ENCODE measurements at regions of chrX and their contacts with region 1.

Region 1: GRCh38 chrX:153947009-153947769 is 2.7 kb upstream of the RENBP start:
- DNase-seq: peak; percentile 83
- ATAC-seq: peak; percentile 82
- H3K4me3 Mint-ChIP-seq: peak overlapping the region; percentile 4
- H3K27ac Mint-ChIP-seq: peak overlapping the region; percentile 86
- H3K4me1 Mint-ChIP-seq: peaks cover 39% of the 10 kb centered on the region
- H3K27me3 Mint-ChIP-seq: no peaks in the 10 kb centered on the region
- CTCF ChIP-seq: peak; percentile 75

Region 2: GRCh38 chrX:153755136-153755535 is 192.1 kb before region 1 on chrX:
- CTCF ChIA-PET with region 1: no interaction called
- POLR2A ChIA-PET with region 1: no interaction called
- intact Hi-C with region 1: no loop called
- DNase-seq: no peak
- ATAC-seq: no peak
- H3K4me3 Mint-ChIP-seq: no peak overlapping the region
- H3K27ac Mint-ChIP-seq: no peak overlapping the region
- H3K4me1 Mint-ChIP-seq: no peaks in the 10 kb centered on the region
- H3K27me3 Mint-ChIP-seq: no peaks in the 10 kb centered on the region
- CTCF ChIP-seq: no peak

Region 3: GRCh38 chrX:153800177-153800722 is 146.9 kb before region 1 on chrX:
- CTCF ChIA-PET with region 1: no interaction called
- POLR2A ChIA-PET with region 1: no interaction called
- intact Hi-C with region 1: no loop called
- DNase-seq: no peak
- ATAC-seq: no peak
- H3K4me3 Mint-ChIP-seq: no peak overlapping the region
- H3K27ac Mint-ChIP-seq: no peak overlapping the region
- H3K4me1 Mint-ChIP-seq: peaks cover 9% of the 10 kb centered on the region
- H3K27me3 Mint-ChIP-seq: no peaks in the 10 kb centered on the region
- CTCF ChIP-seq: no peak

Region 4: GRCh38 chrX:153927922-153928760 is 19.0 kb before region 1 on chrX:
- CTCF ChIA-PET with region 1: interaction called, 136 read pairs
- POLR2A ChIA-PET with region 1: interaction called, 130 read pairs
- intact Hi-C with region 1: no loop called
- DNase-seq: peak; percentile 95
- ATAC-seq: peak; percentile 72
- H3K4me3 Mint-ChIP-seq: peak overlapping the region; percentile 88
- H3K27ac Mint-ChIP-seq: peak overlapping the region; percentile 99
- H3K4me1 Mint-ChIP-seq: peaks cover 22% of the 10 kb centered on the region
- H3K27me3 Mint-ChIP-seq: no peaks in the 10 kb centered on the region
- CTCF ChIP-seq: no peak

Region 5: DNA sequence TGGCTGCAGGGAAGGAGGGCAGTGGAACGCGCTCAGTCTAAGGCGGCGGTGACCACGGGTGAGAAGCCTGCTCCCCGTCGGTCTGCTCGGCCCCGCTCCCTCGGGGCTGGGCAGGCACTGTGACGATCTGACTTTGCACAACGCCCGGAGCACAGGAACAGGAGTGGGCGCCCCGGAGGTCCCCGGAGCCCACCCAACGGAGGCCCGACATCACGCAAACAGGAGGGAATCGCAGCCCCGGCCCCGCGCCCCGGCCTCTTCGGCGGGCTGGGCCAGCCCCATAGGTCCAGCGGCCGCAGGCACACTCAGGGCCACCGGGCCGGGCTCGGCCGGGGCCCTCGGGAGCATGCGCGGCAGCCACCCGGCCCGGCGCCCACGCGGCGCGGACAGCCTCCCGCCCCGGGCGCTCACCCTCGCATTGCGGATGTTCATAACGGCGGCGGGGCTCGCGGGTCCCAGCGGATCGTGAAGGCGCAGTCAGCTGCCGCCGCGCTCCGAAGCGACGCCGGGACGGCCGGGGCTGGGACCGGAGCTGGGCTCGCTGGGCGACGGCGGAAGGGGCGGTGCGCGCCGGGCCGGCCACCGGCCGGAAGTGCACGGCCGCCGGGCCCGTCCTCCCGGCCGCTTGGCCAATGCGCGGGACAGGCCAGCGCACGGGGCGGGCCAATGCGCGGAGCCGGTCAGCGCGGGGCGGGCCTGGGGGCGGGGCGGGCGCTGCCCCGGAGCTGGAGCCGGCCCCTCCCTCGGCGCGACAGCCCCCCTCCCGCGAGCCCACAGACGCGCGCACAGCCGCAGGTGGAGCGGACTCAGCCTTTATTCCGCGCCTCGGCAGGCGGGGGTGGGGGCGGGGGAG is 12.5 kb before region 1 on chrX and contains the start of gene NAA10:
- CTCF ChIA-PET with region 1: interaction called, 136 read pairs
- POLR2A ChIA-PET with region 1: interaction called, 130 read pairs
- intact Hi-C with region 1: no loop called
- DNase-seq: peak; percentile 64
- ATAC-seq: peak; percentile 87
- H3K4me3 Mint-ChIP-seq: peak within 1 kb of the TSS; percentile 88
- H3K27ac Mint-ChIP-seq: peak within 1 kb of the TSS; percentile 78
- H3K4me1 Mint-ChIP-seq: peaks cover 39% of the 10 kb centered on the region
- H3K27me3 Mint-ChIP-seq: no peaks in the 10 kb centered on the region
- CTCF ChIP-seq: no peak
- total RNA-seq, gene NAA10: 123 to 136 TPM

Region 6: DNA sequence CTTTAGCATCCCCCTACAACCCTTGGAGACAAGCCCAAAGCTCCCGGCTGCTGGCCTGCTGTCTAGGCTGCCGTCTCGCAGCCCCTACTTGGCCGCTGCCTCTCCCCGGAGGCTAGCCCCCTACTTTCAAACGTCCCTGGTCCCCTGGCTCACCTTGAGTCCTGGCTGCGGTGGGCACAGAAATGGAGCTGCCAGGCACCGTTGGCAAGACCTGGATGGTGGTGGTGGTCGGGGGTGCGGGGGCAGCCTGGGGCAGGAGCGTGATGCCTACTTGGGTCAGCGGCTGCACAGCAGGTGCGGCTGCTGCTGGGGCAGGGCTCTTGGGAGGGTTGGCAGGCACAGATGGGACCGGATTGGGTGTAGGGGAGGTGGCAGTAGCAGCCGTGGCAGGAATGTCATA is 12.5 kb after region 1 on chrX:
- CTCF ChIA-PET with region 1: interaction called, 3 read pairs
- POLR2A ChIA-PET with region 1: interaction called, 16 read pairs
- intact Hi-C with region 1: no loop called
- DNase-seq: no peak
- ATAC-seq: no peak
- H3K4me3 Mint-ChIP-seq: no peak overlapping the region
- H3K27ac Mint-ChIP-seq: no peak overlapping the region
- H3K4me1 Mint-ChIP-seq: no peaks in the 10 kb centered on the region
- H3K27me3 Mint-ChIP-seq: no peaks in the 10 kb centered on the region
- CTCF ChIP-seq: no peak

Region 7: GRCh38 chrX:153971450-153972367 is 24.5 kb after region 1 on chrX and contains the start of gene HCFC1:
- CTCF ChIA-PET with region 1: interaction called, 40 read pairs
- POLR2A ChIA-PET with region 1: interaction called, 64 read pairs
- intact Hi-C with region 1: no loop called
- DNase-seq: peak; percentile 93
- ATAC-seq: peak; percentile 32
- H3K4me3 Mint-ChIP-seq: peak within 1 kb of the TSS; percentile 93
- H3K27ac Mint-ChIP-seq: peak within 1 kb of the TSS; percentile 100
- H3K4me1 Mint-ChIP-seq: peaks cover 23% of the 10 kb centered on the region
- H3K27me3 Mint-ChIP-seq: no peaks in the 10 kb centered on the region
- CTCF ChIP-seq: no peak
- total RNA-seq, gene HCFC1: 115 to 116 TPM

Region 8: GRCh38 chrX:153988493-153988892 is 41.3 kb after region 1 on chrX:
- CTCF ChIA-PET with region 1: no interaction called
- POLR2A ChIA-PET with region 1: no interaction called
- intact Hi-C with region 1: no loop called
- DNase-seq: no peak
- ATAC-seq: no peak
- H3K4me3 Mint-ChIP-seq: no peak overlapping the region
- H3K27ac Mint-ChIP-seq: peak overlapping the region; percentile 46
- H3K4me1 Mint-ChIP-seq: peaks cover 33% of the 10 kb centered on the region
- H3K27me3 Mint-ChIP-seq: no peaks in the 10 kb centered on the region
- CTCF ChIP-seq: no peak

Region 9: GRCh38 chrX:154064637-154065435 is 117.6 kb after region 1 on chrX:
- CTCF ChIA-PET with region 1: no interaction called
- POLR2A ChIA-PET with region 1: no interaction called
- intact Hi-C with region 1: no loop called
- DNase-seq: no peak
- ATAC-seq: no peak
- H3K4me3 Mint-ChIP-seq: no peak overlapping the region
- H3K27ac Mint-ChIP-seq: peak overlapping the region; percentile 75
- H3K4me1 Mint-ChIP-seq: peaks cover 62% of the 10 kb centered on the region
- H3K27me3 Mint-ChIP-seq: no peaks in the 10 kb centered on the region
- CTCF ChIP-seq: no peak

Measured in activated CD8-positive, alpha-beta T cell treated with anti-CD3 and anti-CD28 coated beads for 36 hours (primary cell).